Sciatic nerve (tissue), 2 donors: ENCODE measurements at regions of chr18 and their contacts with region 1.

Region 1: GRCh38 chr18:75507636-75508035 is 80.1 kb upstream of the SMIM21 start:
- DNase-seq: no peak
- ATAC-seq: peak; percentile 34

Region 2: GRCh38 chr18:75211953-75212750 is 295.5 kb before region 1 on chr18:
- intact Hi-C with region 1: no loop called
- DNase-seq: peak; percentile 74
- ATAC-seq: no peak

Region 3: DNA sequence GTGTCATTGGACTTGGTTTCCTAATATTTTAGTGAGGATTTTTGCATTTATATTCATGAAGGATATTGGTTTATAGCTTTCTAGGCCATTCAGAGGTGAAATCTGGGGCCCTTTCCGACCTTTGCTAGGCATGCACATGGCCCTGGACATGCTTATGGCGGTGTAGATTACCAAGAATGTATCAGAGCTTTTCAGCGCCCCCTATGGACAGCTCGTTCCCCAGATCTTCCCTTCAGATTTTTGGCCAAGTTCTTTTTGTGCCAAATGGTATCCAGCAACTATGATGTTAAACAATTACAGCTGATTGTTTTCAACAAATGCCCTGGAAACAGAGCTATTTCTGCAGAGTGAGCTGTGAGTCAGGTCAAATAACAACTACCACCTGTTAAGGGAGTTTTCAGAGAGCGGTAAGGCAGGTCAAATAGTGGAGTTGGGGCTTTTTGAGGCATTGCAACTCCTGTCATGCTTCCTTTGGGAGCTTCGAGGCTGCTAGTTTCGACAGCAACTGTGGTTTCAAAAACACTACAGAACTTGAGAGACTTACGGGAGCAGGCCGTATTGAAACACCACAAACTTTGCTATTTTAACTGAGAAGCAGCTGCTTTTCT is 799.2 kb after region 1 on chr18:
- intact Hi-C with region 1: loop called (anchors 5 kb)
- DNase-seq: no peak
- ATAC-seq: no peak